Endothelial cell of umbilical vein (primary cell): ENCODE measurements at regions of chr6 and their contacts with region 1.

Region 1: DNA sequence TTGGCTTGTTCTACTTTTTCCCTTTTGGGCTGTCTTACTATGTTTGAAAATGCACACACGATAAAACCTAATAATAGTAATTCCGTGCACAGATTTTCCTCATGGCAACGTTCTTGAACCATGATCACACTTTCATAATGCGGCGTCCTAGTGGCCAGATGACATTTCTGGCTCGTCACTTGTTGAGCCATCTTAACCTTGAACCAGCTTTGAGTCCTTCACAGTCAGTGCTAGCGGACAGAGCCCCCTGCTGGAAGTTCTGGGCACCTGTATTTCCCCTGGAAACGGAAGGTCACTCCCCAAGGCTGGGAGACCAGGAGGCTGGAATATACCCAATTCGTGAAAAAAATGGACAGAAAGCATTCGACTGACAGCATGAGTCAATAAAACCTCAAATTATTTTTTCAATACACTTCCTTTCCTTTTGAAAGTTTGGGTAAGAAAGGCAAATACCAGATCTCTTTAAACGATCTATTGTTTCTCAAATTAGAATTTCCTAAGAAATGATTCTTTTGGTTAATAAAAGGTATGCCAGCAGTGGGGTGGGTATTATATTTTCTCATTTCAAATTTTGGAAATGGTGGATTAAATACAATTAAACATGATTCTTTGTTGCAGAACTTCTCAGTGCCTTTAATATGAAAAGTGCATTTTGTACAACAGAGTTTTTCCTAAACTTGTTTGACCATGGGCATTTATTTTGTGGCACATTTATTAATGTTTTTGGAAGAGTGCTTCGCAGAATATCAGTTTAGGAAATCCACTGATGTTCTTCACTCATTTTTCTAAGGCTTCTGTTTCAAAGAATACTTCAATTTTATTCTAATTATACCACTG is 542.3 kb downstream of the QKI start:
- DNase-seq: peak; percentile 68
- H3K4me3 ChIP-seq: no peak overlapping the region
- H3K27ac ChIP-seq: no peak overlapping the region
- H3K4me1 ChIP-seq: peaks cover 4% of the 10 kb centered on the region
- H3K27me3 ChIP-seq: peaks cover 0 to 8% of the 10 kb centered on the region in 2 experiments
- CTCF ChIP-seq: peak; percentile 81 to 91
- POLR2A ChIP-seq: no peak

Region 2: DNA sequence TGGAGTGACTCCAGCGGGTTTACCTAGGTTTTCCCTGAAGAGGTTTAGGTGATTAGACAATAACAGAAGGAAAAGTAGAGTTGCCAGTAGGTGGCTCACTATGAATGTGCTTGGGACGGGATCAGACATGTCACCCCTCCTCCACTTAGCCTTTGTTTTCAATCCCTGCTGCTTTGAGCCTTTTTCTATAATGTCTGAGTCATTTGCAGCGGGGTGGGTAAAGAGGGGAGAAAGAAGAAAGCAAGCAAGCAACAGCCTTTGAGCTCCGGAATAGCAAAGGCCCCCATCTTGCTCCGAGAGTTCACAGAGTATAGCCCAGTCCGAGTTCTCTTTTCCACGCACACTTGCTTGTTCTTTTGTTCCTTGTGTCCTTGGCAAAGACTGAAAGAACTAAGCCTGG is 1099.9 kb before region 1 on chr6:
- CTCF ChIA-PET with region 1: no interaction called
- POLR2A ChIA-PET with region 1: no interaction called
- dilution Hi-C with region 1: no loop called
- intact Hi-C with region 1: loop called (anchors 2 kb)
- DNase-seq: peak; percentile 69
- H3K4me3 ChIP-seq: no peak overlapping the region
- H3K27ac ChIP-seq: no peak overlapping the region
- H3K4me1 ChIP-seq: no peaks in the 10 kb centered on the region
- H3K27me3 ChIP-seq: no peaks in the 10 kb centered on the region
- CTCF ChIP-seq: peak; percentile 19 to 45
- POLR2A ChIP-seq: no peak

Region 3: GRCh38 chr6:163180874-163181541 is 775.8 kb before region 1 on chr6:
- CTCF ChIA-PET with region 1: interaction called, 4 read pairs
- POLR2A ChIA-PET with region 1: no interaction called
- dilution Hi-C with region 1: no loop called
- intact Hi-C with region 1: loop called (anchors 1 kb)
- DNase-seq: peak; percentile 71
- H3K4me3 ChIP-seq: no peak overlapping the region
- H3K27ac ChIP-seq: no peak overlapping the region
- H3K4me1 ChIP-seq: no peaks in the 10 kb centered on the region
- H3K27me3 ChIP-seq: peaks cover 4 to 9% of the 10 kb centered on the region in 2 experiments
- CTCF ChIP-seq: peak; percentile 93 to 97
- POLR2A ChIP-seq: no peak

Region 4: GRCh38 chr6:163585932-163586437 is 370.8 kb before region 1 on chr6:
- CTCF ChIA-PET with region 1: interaction called, 4 read pairs
- POLR2A ChIA-PET with region 1: no interaction called
- dilution Hi-C with region 1: no loop called
- intact Hi-C with region 1: loop called (anchors 2 kb)
- DNase-seq: peak; percentile 76
- H3K4me3 ChIP-seq: no peak overlapping the region
- H3K27ac ChIP-seq: peak overlapping the region; percentile 21
- H3K4me1 ChIP-seq: peaks cover 20% of the 10 kb centered on the region
- H3K27me3 ChIP-seq: no peaks in the 10 kb centered on the region
- CTCF ChIP-seq: no peak
- POLR2A ChIP-seq: no peak

Region 5: DNA sequence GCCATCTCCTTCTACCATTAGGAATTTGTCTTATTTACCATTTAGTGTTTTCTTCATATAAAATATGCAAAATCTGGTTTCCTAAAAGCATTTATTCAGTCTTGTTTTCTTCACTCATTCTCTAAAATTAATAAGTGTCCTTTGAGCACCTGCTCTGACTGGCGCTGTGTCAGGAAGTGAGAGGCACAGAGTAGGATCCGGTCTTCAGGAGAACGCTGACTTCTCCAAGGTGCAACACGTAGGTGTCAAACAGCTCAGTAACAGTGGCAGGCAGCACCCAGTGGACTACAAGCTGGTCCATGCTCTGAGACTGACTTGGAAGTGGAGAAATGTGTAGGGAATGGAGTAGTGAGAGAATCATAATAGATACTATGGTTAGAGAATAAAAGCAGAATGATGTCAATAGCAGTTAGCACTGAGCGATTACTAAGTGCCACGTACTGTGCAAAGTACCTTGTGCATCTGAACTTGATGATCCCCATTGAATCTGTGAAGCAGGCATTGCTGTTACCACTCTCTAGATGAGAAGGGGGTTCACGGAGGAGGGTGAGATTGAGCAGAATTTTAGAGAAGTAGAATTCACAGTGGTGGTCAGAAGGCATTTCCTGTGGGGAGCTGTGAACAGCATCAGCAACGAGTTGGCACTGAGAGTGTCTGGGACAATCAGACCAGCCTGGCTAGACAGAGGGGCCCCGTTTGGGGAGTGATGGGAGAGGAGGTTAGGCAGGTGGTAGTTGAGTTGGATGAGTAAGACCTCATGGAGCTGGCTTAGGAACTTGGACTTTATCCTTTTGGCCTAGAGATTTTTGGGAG is 27.5 kb after region 1 on chr6:
- CTCF ChIA-PET with region 1: no interaction called
- POLR2A ChIA-PET with region 1: no interaction called
- dilution Hi-C with region 1: no loop called
- intact Hi-C with region 1: no loop called
- DNase-seq: no peak
- H3K4me3 ChIP-seq: no peak overlapping the region
- H3K27ac ChIP-seq: no peak overlapping the region
- H3K4me1 ChIP-seq: no peaks in the 10 kb centered on the region
- H3K27me3 ChIP-seq: no peaks in the 10 kb centered on the region
- CTCF ChIP-seq: no peak
- POLR2A ChIP-seq: no peak

Region 6: GRCh38 chr6:164106345-164106769 is 149.6 kb after region 1 on chr6:
- CTCF ChIA-PET with region 1: interaction called, 5 read pairs
- POLR2A ChIA-PET with region 1: no interaction called
- dilution Hi-C with region 1: no loop called
- intact Hi-C with region 1: loop called (anchors 1 kb)
- DNase-seq: peak; percentile 31
- H3K4me3 ChIP-seq: no peak overlapping the region
- H3K27ac ChIP-seq: no peak overlapping the region
- H3K4me1 ChIP-seq: peaks cover 9% of the 10 kb centered on the region
- H3K27me3 ChIP-seq: no peaks in the 10 kb centered on the region
- CTCF ChIP-seq: peak; percentile 48 to 66
- POLR2A ChIP-seq: no peak